ENCODE measurements at regions of chr13 and their contacts with region 1.

Region 1: GRCh38 chr13:110945948-110946570 is 31.2 kb upstream of the ANKRD10 start:
- DNase-seq: no peak
- ATAC-seq: no peak

Region 2: GRCh38 chr13:110628477-110628793 is 317.6 kb before region 1 on chr13:
- intact Hi-C with region 1: no loop called
- DNase-seq: no peak
- ATAC-seq: no peak

Region 3: DNA sequence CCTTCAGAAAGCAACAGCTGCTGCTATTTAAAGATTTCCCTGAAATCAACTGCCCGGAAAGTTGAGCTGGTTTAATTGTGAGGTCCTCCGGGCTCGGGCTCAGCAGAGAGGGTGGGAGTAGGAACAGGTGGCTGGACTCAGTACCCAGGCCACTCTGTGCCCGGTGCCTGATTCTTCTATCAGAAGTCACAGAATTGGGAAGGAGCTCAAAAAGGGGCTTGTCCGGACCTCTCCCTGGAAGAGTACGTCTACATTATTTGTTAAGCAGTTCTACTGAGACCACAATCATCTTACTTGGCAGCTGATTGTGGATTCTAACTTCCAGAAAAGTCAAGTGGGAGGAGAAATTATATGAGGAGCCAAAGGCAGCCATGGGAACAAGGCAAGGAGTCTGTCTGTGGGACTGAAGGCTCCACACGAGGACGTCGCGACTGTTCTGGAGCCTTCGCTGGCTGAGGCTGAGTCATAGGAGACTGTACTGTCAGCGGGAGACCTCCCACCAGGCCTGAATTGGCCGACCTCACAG is 60.5 kb after region 1 on chr13:
- intact Hi-C with region 1: loop called (anchors 5 kb)
- DNase-seq: peak; percentile 91
- ATAC-seq: peak; percentile 99